A549 (cell line): ENCODE measurements at regions of chr12 and their contacts with region 1.

Region 1: GRCh38 chr12:47758834-47759690 is at the start of gene RAPGEF3:
- DNase-seq: peak; percentile 82 to 92
- ATAC-seq: peak; percentile 87 to 94
- H3K4me3 ChIP-seq: peak within 1 kb of the TSS; percentile 58
- H3K27ac ChIP-seq: peak within 1 kb of the TSS; percentile 80 to 94
- H3K4me1 ChIP-seq: peaks cover 10% of the 10 kb centered on the region
- CTCF ChIP-seq: peak; percentile 62
- EP300 ChIP-seq: no peak
- POLR2A ChIP-seq: peak; percentile 9; the same call in 1 of the 2 replicates
- RAD21 ChIP-seq: 0 out of 5 replicates have a peak, but pooled peaks of 1 of the 2 experiments have one; percentile 15
- polyA plus RNA-seq, gene RAPGEF3: 0.70 and 0.75 TPM in 2 replicates

Region 2: GRCh38 chr12:47361389-47362021 is 397.6 kb before region 1 on chr12:
- CTCF ChIA-PET with region 1: no interaction called
- POLR2A ChIA-PET with region 1: no interaction called
- DNase-seq: peak in 1 of 2 experiments; percentile 40
- ATAC-seq: peak in 1 of 2 experiments; percentile 84; a peak in 4 of 6 replicates
- H3K4me3 ChIP-seq: no peak overlapping the region
- H3K27ac ChIP-seq: peak overlapping the region; percentile 3 to 64; a peak in 4 of 6 replicates
- H3K4me1 ChIP-seq: peaks cover 16% of the 10 kb centered on the region; the same call in 1 of the 3 replicates
- CTCF ChIP-seq: no peak
- EP300 ChIP-seq: no peak
- POLR2A ChIP-seq: no peak
- RAD21 ChIP-seq: peak; percentile 14 to 19; a peak in 3 of 5 replicates

Region 3: GRCh38 chr12:47736877-47737676 is 22.0 kb before region 1 on chr12:
- CTCF ChIA-PET with region 1: interaction called, 336 read pairs
- POLR2A ChIA-PET with region 1: interaction called, 5 read pairs
- DNase-seq: no peak
- ATAC-seq: peak in 1 of 2 experiments; percentile 18; a peak in 2 of 6 replicates
- H3K4me3 ChIP-seq: no peak overlapping the region
- H3K27ac ChIP-seq: no peak overlapping the region
- H3K4me1 ChIP-seq: peaks cover 8% of the 10 kb centered on the region
- CTCF ChIP-seq: no peak
- EP300 ChIP-seq: no peak
- POLR2A ChIP-seq: no peak
- RAD21 ChIP-seq: no peak